Activated CD8-positive, alpha-beta T cell treated with anti-CD3 and anti-CD28 coated beads for 36 hours (primary cell): ENCODE measurements at regions of chr1 and their contacts with region 1.

Region 1: DNA sequence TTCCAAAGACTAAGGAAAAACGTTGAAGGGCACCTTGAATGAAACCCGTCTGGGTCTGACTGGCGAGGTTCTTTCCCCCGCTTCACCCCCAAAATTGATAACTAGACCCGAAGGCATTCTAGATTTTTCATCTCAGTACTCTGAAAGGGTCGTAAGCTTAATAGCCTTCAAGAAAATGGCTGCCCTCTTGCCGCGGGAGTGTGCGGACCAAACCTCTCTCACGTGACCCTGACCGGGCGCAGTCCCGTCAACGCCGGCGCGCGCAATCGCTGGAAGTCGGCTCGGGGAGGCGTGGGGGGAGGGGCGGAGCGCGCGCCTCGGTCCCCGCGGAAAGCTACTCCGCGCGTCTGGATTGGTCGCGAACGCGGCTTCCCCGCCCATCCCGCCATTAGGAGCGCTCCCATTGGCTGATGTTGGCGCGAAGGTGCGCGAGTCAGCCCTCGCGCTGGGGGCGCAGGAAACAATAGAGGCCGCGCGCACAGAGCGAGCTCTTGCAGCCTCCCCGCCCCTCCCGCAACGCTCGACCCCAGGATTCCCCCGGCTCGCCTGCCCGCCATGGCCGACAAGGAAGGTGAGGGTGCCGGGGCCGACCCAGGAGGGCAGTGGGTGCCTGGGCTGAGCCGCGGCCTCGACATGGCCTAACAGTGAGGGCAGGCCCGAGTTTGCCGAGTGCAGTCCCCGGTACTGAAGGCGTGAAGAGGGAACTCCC is at the start of gene RBBP4:
- DNase-seq: peak; percentile 97
- ATAC-seq: peak; percentile 89
- H3K4me3 Mint-ChIP-seq: peak within 1 kb of the TSS; percentile 99
- H3K27ac Mint-ChIP-seq: peak within 1 kb of the TSS; percentile 100
- H3K4me1 Mint-ChIP-seq: peaks cover 38% of the 10 kb centered on the region
- H3K27me3 Mint-ChIP-seq: no peaks in the 10 kb centered on the region
- CTCF ChIP-seq: no peak
- total RNA-seq, gene RBBP4: 308 to 318 TPM

Region 2: GRCh38 chr1:32521165-32521564 is 129.7 kb before region 1 on chr1:
- CTCF ChIA-PET with region 1: interaction called, 10 read pairs
- POLR2A ChIA-PET with region 1: interaction called, 3 read pairs
- intact Hi-C with region 1: no loop called
- DNase-seq: no peak
- ATAC-seq: no peak
- H3K4me3 Mint-ChIP-seq: peak overlapping the region; percentile 67
- H3K27ac Mint-ChIP-seq: no peak overlapping the region
- H3K4me1 Mint-ChIP-seq: peaks cover 2% of the 10 kb centered on the region
- H3K27me3 Mint-ChIP-seq: peaks cover 5% of the 10 kb centered on the region
- CTCF ChIP-seq: no peak

Region 3: DNA sequence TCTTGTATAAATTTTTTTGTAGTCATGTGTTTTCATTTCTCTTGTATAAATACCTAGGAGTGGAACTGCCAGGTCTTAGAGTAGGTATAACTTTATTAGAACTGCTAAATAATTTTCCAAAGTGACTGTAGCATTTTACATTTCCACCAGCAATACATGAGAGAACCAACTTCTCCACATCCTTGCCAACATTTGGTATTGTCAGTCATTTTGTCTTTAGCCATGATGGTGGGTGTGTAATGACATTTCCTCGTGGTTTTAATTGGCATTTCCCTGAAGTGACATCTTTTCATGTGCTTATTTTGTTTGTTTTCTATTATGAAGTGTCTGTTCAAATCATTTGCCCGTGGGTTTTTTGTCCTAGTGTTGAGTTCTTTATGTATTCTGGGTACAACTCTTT is 82.0 kb before region 1 on chr1:
- CTCF ChIA-PET with region 1: no interaction called
- POLR2A ChIA-PET with region 1: no interaction called
- intact Hi-C with region 1: no loop called
- DNase-seq: no peak
- ATAC-seq: no peak
- H3K4me3 Mint-ChIP-seq: no peak overlapping the region
- H3K27ac Mint-ChIP-seq: no peak overlapping the region
- H3K4me1 Mint-ChIP-seq: no peaks in the 10 kb centered on the region
- H3K27me3 Mint-ChIP-seq: peaks cover 4% of the 10 kb centered on the region
- CTCF ChIP-seq: no peak

Region 4: GRCh38 chr1:32636914-32637645 is 13.8 kb before region 1 on chr1:
- CTCF ChIA-PET with region 1: no interaction called
- POLR2A ChIA-PET with region 1: interaction called, 17 read pairs
- intact Hi-C with region 1: no loop called
- DNase-seq: no peak
- ATAC-seq: no peak
- H3K4me3 Mint-ChIP-seq: no peak overlapping the region
- H3K27ac Mint-ChIP-seq: no peak overlapping the region
- H3K4me1 Mint-ChIP-seq: peaks cover 7% of the 10 kb centered on the region
- H3K27me3 Mint-ChIP-seq: no peaks in the 10 kb centered on the region
- CTCF ChIP-seq: no peak

Region 5: GRCh38 chr1:32761253-32761880 is 110.5 kb after region 1 on chr1:
- CTCF ChIA-PET with region 1: no interaction called
- POLR2A ChIA-PET with region 1: no interaction called
- intact Hi-C with region 1: no loop called
- DNase-seq: peak; percentile 81
- ATAC-seq: peak; percentile 81
- H3K4me3 Mint-ChIP-seq: no peak overlapping the region
- H3K27ac Mint-ChIP-seq: peak overlapping the region; percentile 63
- H3K4me1 Mint-ChIP-seq: peaks cover 26% of the 10 kb centered on the region
- H3K27me3 Mint-ChIP-seq: no peaks in the 10 kb centered on the region
- CTCF ChIP-seq: no peak